ENCODE measurements at regions of chr2 and their contacts with region 1.

Region 1: DNA sequence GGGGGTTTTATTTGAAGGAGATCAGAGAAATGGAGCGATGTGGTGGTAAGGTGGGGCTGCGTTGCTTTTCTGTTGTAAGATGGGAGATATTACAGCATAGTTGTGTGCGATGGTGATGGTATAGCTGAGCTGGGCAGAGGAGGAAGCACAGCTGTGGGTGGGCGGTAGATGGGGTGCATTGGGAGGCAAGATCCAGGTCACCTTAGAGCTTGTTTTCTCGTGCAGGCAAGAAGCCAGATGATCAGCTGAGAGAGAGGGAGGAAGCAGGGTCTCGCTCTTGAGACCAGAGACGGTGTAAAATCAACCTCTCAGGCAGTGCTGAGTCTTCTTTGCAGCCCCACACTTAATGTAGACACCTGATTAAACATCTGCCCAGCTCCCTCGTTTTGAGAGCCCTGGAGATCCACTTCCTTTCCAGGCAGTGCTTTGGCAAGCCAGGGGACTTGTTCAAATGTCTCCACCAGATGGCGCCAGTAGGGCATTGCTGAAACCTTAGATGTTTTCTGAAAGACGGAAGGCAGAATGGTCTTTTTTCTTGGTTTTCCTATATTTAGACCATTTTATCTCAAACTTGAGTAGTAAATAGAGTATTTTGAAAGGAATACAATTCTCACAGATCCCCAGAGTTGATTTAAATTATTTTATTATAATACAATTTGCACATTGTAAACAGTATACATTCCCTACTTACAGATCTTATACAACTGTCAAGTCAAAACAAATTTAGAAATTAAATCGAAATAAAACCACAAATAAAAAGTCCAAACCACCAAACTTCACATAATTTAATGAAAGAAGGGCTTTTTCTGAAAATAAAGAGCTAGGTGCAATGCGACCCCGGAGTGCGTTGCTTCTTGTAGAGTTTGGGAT is 21.1 kb upstream of the LYPD6B start:
- DNase-seq: peak; percentile 86
- ATAC-seq: peak; percentile 61
- H3K4me3 Mint-ChIP-seq: no peak overlapping the region
- H3K27ac Mint-ChIP-seq: no peak overlapping the region
- H3K4me1 Mint-ChIP-seq: peaks cover 2% of the 10 kb centered on the region
- H3K27me3 Mint-ChIP-seq: peaks cover 1% of the 10 kb centered on the region

Region 2: GRCh38 chr2:148634749-148635148 is 382.6 kb before region 1 on chr2:
- CTCF ChIA-PET with region 1: no interaction called
- POLR2A ChIA-PET with region 1: no interaction called
- intact Hi-C with region 1: no loop called
- DNase-seq: no peak
- ATAC-seq: no peak
- H3K4me3 Mint-ChIP-seq: no peak overlapping the region
- H3K27ac Mint-ChIP-seq: no peak overlapping the region
- H3K4me1 Mint-ChIP-seq: no peaks in the 10 kb centered on the region
- H3K27me3 Mint-ChIP-seq: no peaks in the 10 kb centered on the region

Region 3: GRCh38 chr2:149313512-149313972 is 296.2 kb after region 1 on chr2:
- CTCF ChIA-PET with region 1: interaction called, 15 read pairs
- POLR2A ChIA-PET with region 1: no interaction called
- intact Hi-C with region 1: loop called (anchors 1 to 5 kb)
- DNase-seq: peak; percentile 15
- ATAC-seq: peak; percentile 61
- H3K4me3 Mint-ChIP-seq: no peak overlapping the region
- H3K27ac Mint-ChIP-seq: no peak overlapping the region
- H3K4me1 Mint-ChIP-seq: no peaks in the 10 kb centered on the region
- H3K27me3 Mint-ChIP-seq: peaks cover 9% of the 10 kb centered on the region